Naive thymus-derived CD4-positive, alpha-beta T cell (primary cell): ENCODE measurements at regions of chr3 and their contacts with region 1.

Region 1: DNA sequence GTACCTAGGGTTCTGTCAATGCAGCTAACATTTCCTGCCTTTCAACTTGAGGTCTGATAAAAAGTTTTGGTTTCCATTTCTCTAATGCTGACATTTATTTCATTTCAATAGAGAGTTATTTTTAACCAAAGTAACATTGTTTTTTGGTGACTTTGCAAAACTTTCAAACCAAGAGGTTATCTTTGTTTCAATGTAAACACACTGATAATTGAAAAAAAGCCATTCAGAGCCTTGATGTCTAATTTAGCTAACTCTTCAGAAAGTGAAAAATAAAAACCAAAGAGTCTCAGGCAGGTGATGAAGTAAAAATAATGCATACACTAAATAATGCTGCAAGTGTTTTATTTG is 9.6 kb upstream of the TIPARP start:
- DNase-seq: no peak
- ATAC-seq: no peak
- H3K4me3 ChIP-seq: no peak overlapping the region
- H3K4me3 Mint-ChIP-seq: peak overlapping the region in 4 of 10 donors; percentile 10 to 66 (median 34)
- H3K27ac ChIP-seq: no peak overlapping the region
- H3K27ac Mint-ChIP-seq: peak overlapping the region in 4 of 9 donors; percentile 15 to 91 (median 32)
- H3K4me1 ChIP-seq: peaks cover 5 to 19% of the 10 kb centered on the region in 2 donors
- H3K4me1 Mint-ChIP-seq: peaks cover 12 to 67% (median 24%) of the 10 kb centered on the region in 7 donors
- H3K27me3 ChIP-seq: no peaks in the 10 kb centered on the region
- H3K27me3 Mint-ChIP-seq: no peaks in the 10 kb centered on the region

Region 2: GRCh38 chr3:156605686-156606605 is 58.9 kb before region 1 on chr3:
- CTCF ChIA-PET with region 1: no interaction called
- POLR2A ChIA-PET with region 1: no interaction called
- intact Hi-C with region 1: loop called (anchors 2 to 5 kb)
- DNase-seq: no peak
- ATAC-seq: peak; percentile 51
- H3K4me3 ChIP-seq: peak overlapping the region; percentile 17
- H3K4me3 Mint-ChIP-seq: peak overlapping the region; percentile 18 to 88 (median 68)
- H3K27ac ChIP-seq: no peak overlapping the region
- H3K27ac Mint-ChIP-seq: peak overlapping the region in 1 of 9 donors; percentile 74
- H3K4me1 ChIP-seq: peaks cover 0 to 5% of the 10 kb centered on the region in 2 donors
- H3K4me1 Mint-ChIP-seq: peaks cover 5 to 45% (median 10%) of the 10 kb centered on the region in 7 donors
- H3K27me3 ChIP-seq: no peaks in the 10 kb centered on the region
- H3K27me3 Mint-ChIP-seq: peaks cover 25 to 32% (median 27%) of the 10 kb centered on the region in 5 donors

Region 3: DNA sequence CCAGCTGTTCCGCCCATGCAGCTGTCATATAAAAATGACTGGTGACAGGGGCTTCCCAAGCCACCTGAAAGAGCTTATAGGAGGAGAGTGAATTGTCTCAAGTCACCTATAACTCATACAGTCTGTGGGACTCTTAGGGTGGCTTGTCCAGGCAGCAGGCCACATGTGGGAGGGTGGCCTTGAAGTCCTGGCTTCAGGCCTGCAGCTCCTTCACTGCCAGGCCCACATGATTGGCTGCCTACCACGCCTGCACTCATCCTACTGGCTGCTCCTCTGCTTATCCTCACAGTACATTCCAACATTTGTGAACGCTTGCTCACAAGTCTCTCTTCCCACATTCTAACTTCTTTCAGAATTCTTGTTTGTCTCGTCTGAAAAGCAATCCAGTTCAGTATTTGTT is 31.5 kb before region 1 on chr3:
- CTCF ChIA-PET with region 1: no interaction called
- POLR2A ChIA-PET with region 1: no interaction called
- intact Hi-C with region 1: no loop called
- DNase-seq: no peak
- ATAC-seq: no peak
- H3K4me3 ChIP-seq: no peak overlapping the region
- H3K4me3 Mint-ChIP-seq: no peak overlapping the region
- H3K27ac ChIP-seq: no peak overlapping the region
- H3K27ac Mint-ChIP-seq: no peak overlapping the region
- H3K4me1 ChIP-seq: no peaks in the 10 kb centered on the region
- H3K4me1 Mint-ChIP-seq: no peaks in the 10 kb centered on the region
- H3K27me3 ChIP-seq: no peaks in the 10 kb centered on the region
- H3K27me3 Mint-ChIP-seq: peaks cover 0 to 6% (median 0%) of the 10 kb centered on the region in 5 donors

Region 4: GRCh38 chr3:156643729-156644389 is 20.9 kb before region 1 on chr3:
- CTCF ChIA-PET with region 1: no interaction called
- POLR2A ChIA-PET with region 1: no interaction called
- intact Hi-C with region 1: loop called in 1 of 2 experiments (anchors 2 kb)
- DNase-seq: peak in 8 of 9 donors; percentile 20 to 52 (median 38)
- ATAC-seq: peak; percentile 93
- H3K4me3 ChIP-seq: peak overlapping the region; percentile 17
- H3K4me3 Mint-ChIP-seq: peak overlapping the region; percentile 58 to 85 (median 70)
- H3K27ac ChIP-seq: no peak overlapping the region
- H3K27ac Mint-ChIP-seq: peak overlapping the region in 7 of 9 donors; percentile 3 to 92 (median 23)
- H3K4me1 ChIP-seq: peaks cover 5 to 13% of the 10 kb centered on the region in 2 donors
- H3K4me1 Mint-ChIP-seq: peaks cover 7 to 30% (median 16%) of the 10 kb centered on the region in 7 donors
- H3K27me3 ChIP-seq: no peaks in the 10 kb centered on the region
- H3K27me3 Mint-ChIP-seq: peaks cover 6 to 12% (median 7%) of the 10 kb centered on the region in 5 donors